Calu3 (cell line): ENCODE measurements at regions of chr7 and their contacts with region 1.

Region 1: DNA sequence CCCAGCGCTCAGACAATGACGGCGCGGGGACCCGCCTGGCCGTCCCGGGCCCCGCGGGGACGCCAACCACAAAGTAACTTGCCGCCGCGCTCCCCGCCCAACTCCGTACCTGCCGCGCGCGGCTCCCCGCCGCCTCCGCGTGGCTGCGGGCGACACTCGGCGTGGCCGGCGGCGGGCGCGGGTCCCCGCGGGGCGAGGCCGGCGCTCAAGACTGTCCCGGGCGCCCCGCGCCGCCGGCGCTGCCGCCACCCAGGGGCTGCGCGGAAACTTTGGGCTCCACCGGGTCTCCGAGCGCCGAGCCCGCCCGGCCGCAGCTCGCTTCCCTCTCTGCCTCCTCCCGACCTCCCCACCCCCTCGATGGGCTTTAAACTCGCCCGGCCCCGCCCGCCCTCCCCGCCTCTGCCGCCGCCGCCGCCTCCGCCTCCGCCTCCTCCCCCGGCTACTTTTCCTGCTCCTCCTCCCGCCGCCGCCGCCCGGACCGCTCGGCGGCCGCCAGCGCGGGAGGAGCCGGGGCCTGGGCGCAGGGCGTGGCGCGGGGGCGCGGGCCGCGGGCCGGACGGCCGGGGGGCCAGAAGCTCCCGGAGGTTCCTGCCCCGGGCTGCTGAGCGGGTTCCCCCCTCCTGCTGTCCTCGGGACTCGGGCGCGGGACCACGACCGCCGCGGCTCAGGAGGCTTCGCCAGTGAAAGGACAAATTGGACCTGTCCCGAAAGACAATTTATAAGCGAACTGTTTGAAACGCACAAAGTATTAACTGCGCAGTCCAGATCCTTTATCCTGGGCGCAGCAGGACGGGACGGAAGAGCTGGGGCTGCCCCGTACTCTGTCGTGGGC is 10.6 kb upstream of the GRB10 start:
- DNase-seq: peak; percentile 80
- H3K4me3 Mint-ChIP-seq: peak overlapping the region; percentile 91
- H3K27ac Mint-ChIP-seq: peak overlapping the region; percentile 7
- H3K4me1 Mint-ChIP-seq: peaks cover 32% of the 10 kb centered on the region
- H3K27me3 Mint-ChIP-seq: no peaks in the 10 kb centered on the region
- CTCF ChIP-seq: no peak

Region 2: GRCh38 chr7:50467817-50468610 is 325.3 kb before region 1 on chr7:
- CTCF ChIA-PET with region 1: no interaction called
- intact Hi-C with region 1: loop called (anchors 10 kb)
- DNase-seq: peak; percentile 93
- H3K4me3 Mint-ChIP-seq: peak overlapping the region; percentile 25
- H3K27ac Mint-ChIP-seq: peak overlapping the region; percentile 13
- H3K4me1 Mint-ChIP-seq: no peaks in the 10 kb centered on the region
- H3K27me3 Mint-ChIP-seq: no peaks in the 10 kb centered on the region
- CTCF ChIP-seq: peak; percentile 96

Region 3: GRCh38 chr7:50761713-50762112 is 31.6 kb before region 1 on chr7:
- CTCF ChIA-PET with region 1: no interaction called
- intact Hi-C with region 1: no loop called
- DNase-seq: no peak
- H3K4me3 Mint-ChIP-seq: no peak overlapping the region
- H3K27ac Mint-ChIP-seq: no peak overlapping the region
- H3K4me1 Mint-ChIP-seq: peaks cover 16% of the 10 kb centered on the region
- H3K27me3 Mint-ChIP-seq: no peaks in the 10 kb centered on the region
- CTCF ChIP-seq: no peak

Region 4: GRCh38 chr7:50962962-50963374 is 169.6 kb after region 1 on chr7:
- CTCF ChIA-PET with region 1: no interaction called
- intact Hi-C with region 1: loop called (anchors 5 kb)
- DNase-seq: peak; percentile 92
- H3K4me3 Mint-ChIP-seq: no peak overlapping the region
- H3K27ac Mint-ChIP-seq: no peak overlapping the region
- H3K4me1 Mint-ChIP-seq: peaks cover 42% of the 10 kb centered on the region
- H3K27me3 Mint-ChIP-seq: no peaks in the 10 kb centered on the region
- CTCF ChIP-seq: no peak

Region 5: DNA sequence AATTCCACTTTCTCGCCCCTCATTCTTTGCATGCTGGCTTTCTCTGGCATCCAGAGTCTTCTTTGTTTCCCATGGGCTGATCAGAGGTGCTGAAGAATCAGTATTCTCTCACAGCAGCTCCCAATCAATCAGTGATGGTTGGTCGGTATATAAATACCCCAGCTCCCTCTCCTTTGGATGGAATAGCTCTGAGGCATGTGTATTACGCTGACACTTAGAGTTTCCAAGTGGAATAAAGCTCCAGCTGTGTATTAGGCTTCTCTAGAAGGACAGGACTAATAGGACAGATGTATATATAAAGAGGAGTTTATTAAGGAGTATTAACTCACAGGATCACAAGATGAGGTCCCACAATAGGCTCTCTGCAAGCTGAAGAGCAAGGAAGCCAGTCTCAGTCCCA is 207.6 kb after region 1 on chr7:
- CTCF ChIA-PET with region 1: interaction called, 9 read pairs
- intact Hi-C with region 1: loop called (anchors 5 kb)
- DNase-seq: no peak
- H3K4me3 Mint-ChIP-seq: no peak overlapping the region
- H3K27ac Mint-ChIP-seq: no peak overlapping the region
- H3K4me1 Mint-ChIP-seq: peaks cover 9% of the 10 kb centered on the region
- H3K27me3 Mint-ChIP-seq: peaks cover 17% of the 10 kb centered on the region
- CTCF ChIP-seq: no peak

Region 6: GRCh38 chr7:51067757-51068156 is 274.4 kb after region 1 on chr7:
- CTCF ChIA-PET with region 1: no interaction called
- intact Hi-C with region 1: loop called (anchors 2 kb)
- DNase-seq: peak; percentile 86
- H3K4me3 Mint-ChIP-seq: no peak overlapping the region
- H3K27ac Mint-ChIP-seq: no peak overlapping the region
- H3K4me1 Mint-ChIP-seq: peaks cover 62% of the 10 kb centered on the region
- H3K27me3 Mint-ChIP-seq: no peaks in the 10 kb centered on the region
- CTCF ChIP-seq: peak; percentile 96